CD4-positive, alpha-beta T cell (primary cell): ENCODE measurements at regions of chr16 and their contacts with region 1.

Region 1: DNA sequence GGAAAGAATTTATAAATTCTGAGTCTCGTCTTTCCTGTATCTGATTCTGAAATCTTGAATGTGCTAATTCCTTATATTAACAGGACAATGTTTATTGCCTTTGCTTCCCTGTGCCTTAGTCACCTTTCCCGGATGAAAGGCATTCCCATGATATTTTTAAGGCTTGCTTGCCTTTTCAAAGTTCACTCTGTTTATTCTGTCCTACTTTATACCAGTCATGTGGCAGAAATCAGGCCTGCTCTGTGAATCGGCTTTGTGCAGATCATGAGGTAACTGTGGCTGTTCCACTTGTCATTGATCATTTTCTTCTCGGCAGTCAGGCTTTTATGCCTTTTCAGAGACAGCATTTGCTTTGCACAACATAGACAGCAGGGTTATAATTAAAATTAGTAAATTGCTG is 28.8 kb upstream of the ABCC11 start:
- DNase-seq: no peak
- ATAC-seq: no peak
- H3K4me3 ChIP-seq: no peak overlapping the region
- H3K4me3 Mint-ChIP-seq: no peak overlapping the region
- H3K27ac ChIP-seq: no peak overlapping the region
- H3K27ac Mint-ChIP-seq: no peak overlapping the region
- H3K4me1 ChIP-seq: no peaks in the 10 kb centered on the region
- H3K4me1 Mint-ChIP-seq: peaks cover 27% of the 10 kb centered on the region
- H3K27me3 ChIP-seq: no peaks in the 10 kb centered on the region
- H3K27me3 Mint-ChIP-seq: no peaks in the 10 kb centered on the region
- CTCF ChIP-seq: no peak

Region 2: GRCh38 chr16:48310908-48311641 is 35.0 kb after region 1 on chr16:
- CTCF ChIA-PET with region 1: no interaction called
- POLR2A ChIA-PET with region 1: no interaction called
- intact Hi-C with region 1: loop called in 1 of 2 experiments (anchors 1 kb)
- DNase-seq: no peak
- ATAC-seq: no peak
- H3K4me3 ChIP-seq: no peak overlapping the region
- H3K4me3 Mint-ChIP-seq: no peak overlapping the region
- H3K27ac ChIP-seq: no peak overlapping the region
- H3K27ac Mint-ChIP-seq: no peak overlapping the region
- H3K4me1 ChIP-seq: no peaks in the 10 kb centered on the region
- H3K4me1 Mint-ChIP-seq: peaks cover 22% of the 10 kb centered on the region
- H3K27me3 ChIP-seq: no peaks in the 10 kb centered on the region
- H3K27me3 Mint-ChIP-seq: no peaks in the 10 kb centered on the region
- CTCF ChIP-seq: no peak

Region 3: DNA sequence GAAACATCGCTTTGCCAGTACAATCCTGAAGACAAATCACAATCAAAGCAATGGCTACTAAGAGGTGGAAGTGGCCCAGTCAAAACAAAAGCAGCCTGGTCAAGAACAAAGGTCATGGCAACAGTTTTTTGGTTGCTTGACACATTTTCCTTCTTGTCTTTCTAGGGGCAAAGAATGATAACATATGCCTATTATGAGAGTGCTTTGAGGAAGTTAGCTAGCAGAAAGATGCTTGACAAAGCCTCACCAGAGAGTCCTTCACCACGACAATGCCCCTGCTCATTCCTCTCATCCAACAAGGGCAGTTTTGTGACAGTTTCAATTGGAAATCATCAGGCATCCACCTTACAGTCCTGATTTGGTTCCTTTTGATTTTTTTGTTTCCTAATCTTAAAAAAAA is 365.7 kb after region 1 on chr16:
- CTCF ChIA-PET with region 1: no interaction called
- POLR2A ChIA-PET with region 1: no interaction called
- intact Hi-C with region 1: no loop called
- DNase-seq: no peak
- ATAC-seq: no peak
- H3K4me3 ChIP-seq: no peak overlapping the region
- H3K4me3 Mint-ChIP-seq: no peak overlapping the region
- H3K27ac ChIP-seq: no peak overlapping the region
- H3K27ac Mint-ChIP-seq: no peak overlapping the region
- H3K4me1 ChIP-seq: no peaks in the 10 kb centered on the region
- H3K4me1 Mint-ChIP-seq: no peaks in the 10 kb centered on the region
- H3K27me3 ChIP-seq: no peaks in the 10 kb centered on the region
- H3K27me3 Mint-ChIP-seq: no peaks in the 10 kb centered on the region
- CTCF ChIP-seq: no peak